ENCODE measurements at regions of chr15 and their contacts with region 1.

Region 1: GRCh38 chr15:51162865-51163762 is 68.4 kb upstream of the TNFAIP8L3 start:
- DNase-seq: peak; percentile 85
- H3K4me3 ChIP-seq: peak overlapping the region in 1 of 3 experiments; percentile 23
- H3K27ac ChIP-seq: no peak overlapping the region
- H3K4me1 ChIP-seq: peaks cover 4% of the 10 kb centered on the region
- H3K27me3 ChIP-seq: peaks cover 9 to 12% of the 10 kb centered on the region in 2 experiments
- CTCF ChIP-seq: peak; percentile 87 to 94
- POLR2A ChIP-seq: no peak

Region 2: GRCh38 chr15:50633653-50634052 is 529.5 kb before region 1 on chr15:
- CTCF ChIA-PET with region 1: no interaction called
- POLR2A ChIA-PET with region 1: no interaction called
- dilution Hi-C with region 1: no loop called
- intact Hi-C with region 1: no loop called
- DNase-seq: peak; percentile 59
- H3K4me3 ChIP-seq: peak overlapping the region in 1 of 3 experiments; percentile 44
- H3K27ac ChIP-seq: peak overlapping the region; percentile 50
- H3K4me1 ChIP-seq: peaks cover 22% of the 10 kb centered on the region
- H3K27me3 ChIP-seq: no peaks in the 10 kb centered on the region
- CTCF ChIP-seq: no peak
- POLR2A ChIP-seq: no peak

Region 3: GRCh38 chr15:51093839-51094605 is 69.1 kb before region 1 on chr15:
- CTCF ChIA-PET with region 1: interaction called, 28 read pairs
- POLR2A ChIA-PET with region 1: no interaction called
- dilution Hi-C with region 1: no loop called
- intact Hi-C with region 1: loop called (anchors 2 kb)
- DNase-seq: peak; percentile 59
- H3K4me3 ChIP-seq: peak overlapping the region; percentile 75 to 95 (median 91)
- H3K27ac ChIP-seq: peak overlapping the region; percentile 61
- H3K4me1 ChIP-seq: peaks cover 78% of the 10 kb centered on the region
- H3K27me3 ChIP-seq: no peaks in the 10 kb centered on the region
- CTCF ChIP-seq: no peak
- POLR2A ChIP-seq: peak; percentile 38

Region 4: DNA sequence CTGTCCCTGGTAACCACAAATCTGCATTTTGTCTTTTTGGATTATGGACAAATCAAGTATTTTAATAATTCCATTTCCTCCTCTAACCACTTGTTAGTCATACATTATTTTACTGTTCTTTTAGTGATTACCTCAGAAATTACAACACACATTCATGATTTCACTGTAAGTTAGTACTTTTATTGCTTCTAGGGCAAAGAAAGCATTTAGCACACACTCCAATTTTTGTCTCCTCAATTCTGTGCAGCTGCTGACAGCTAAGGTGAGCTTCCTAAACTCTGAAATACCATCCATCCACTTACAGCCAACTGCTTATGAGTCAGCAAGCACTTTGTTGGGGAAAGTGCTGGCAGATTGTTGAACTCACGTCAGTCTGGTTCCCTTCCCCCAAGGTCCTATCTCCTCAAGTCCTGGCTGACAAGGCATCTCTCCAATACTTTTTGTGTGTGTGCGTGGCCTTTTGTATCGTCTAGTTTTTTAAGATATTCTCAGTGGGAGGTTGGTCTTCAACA is 19.0 kb before region 1 on chr15:
- CTCF ChIA-PET with region 1: interaction called, 30 read pairs
- POLR2A ChIA-PET with region 1: no interaction called
- dilution Hi-C with region 1: no loop called
- intact Hi-C with region 1: no loop called
- DNase-seq: peak; percentile 41
- H3K4me3 ChIP-seq: no peak overlapping the region
- H3K27ac ChIP-seq: no peak overlapping the region
- H3K4me1 ChIP-seq: peaks cover 5% of the 10 kb centered on the region
- H3K27me3 ChIP-seq: no peaks in the 10 kb centered on the region
- CTCF ChIP-seq: no peak
- POLR2A ChIP-seq: no peak

Region 5: GRCh38 chr15:51227940-51228783 is 65.0 kb after region 1 on chr15:
- CTCF ChIA-PET with region 1: interaction called, 43 read pairs
- POLR2A ChIA-PET with region 1: no interaction called
- dilution Hi-C with region 1: no loop called
- intact Hi-C with region 1: no loop called
- DNase-seq: peak; percentile 60
- H3K4me3 ChIP-seq: no peak overlapping the region
- H3K27ac ChIP-seq: peak overlapping the region; percentile 11
- H3K4me1 ChIP-seq: peaks cover 27% of the 10 kb centered on the region
- H3K27me3 ChIP-seq: peaks cover 21 to 24% of the 10 kb centered on the region in 2 experiments
- CTCF ChIP-seq: no peak
- POLR2A ChIP-seq: no peak

Region 6: DNA sequence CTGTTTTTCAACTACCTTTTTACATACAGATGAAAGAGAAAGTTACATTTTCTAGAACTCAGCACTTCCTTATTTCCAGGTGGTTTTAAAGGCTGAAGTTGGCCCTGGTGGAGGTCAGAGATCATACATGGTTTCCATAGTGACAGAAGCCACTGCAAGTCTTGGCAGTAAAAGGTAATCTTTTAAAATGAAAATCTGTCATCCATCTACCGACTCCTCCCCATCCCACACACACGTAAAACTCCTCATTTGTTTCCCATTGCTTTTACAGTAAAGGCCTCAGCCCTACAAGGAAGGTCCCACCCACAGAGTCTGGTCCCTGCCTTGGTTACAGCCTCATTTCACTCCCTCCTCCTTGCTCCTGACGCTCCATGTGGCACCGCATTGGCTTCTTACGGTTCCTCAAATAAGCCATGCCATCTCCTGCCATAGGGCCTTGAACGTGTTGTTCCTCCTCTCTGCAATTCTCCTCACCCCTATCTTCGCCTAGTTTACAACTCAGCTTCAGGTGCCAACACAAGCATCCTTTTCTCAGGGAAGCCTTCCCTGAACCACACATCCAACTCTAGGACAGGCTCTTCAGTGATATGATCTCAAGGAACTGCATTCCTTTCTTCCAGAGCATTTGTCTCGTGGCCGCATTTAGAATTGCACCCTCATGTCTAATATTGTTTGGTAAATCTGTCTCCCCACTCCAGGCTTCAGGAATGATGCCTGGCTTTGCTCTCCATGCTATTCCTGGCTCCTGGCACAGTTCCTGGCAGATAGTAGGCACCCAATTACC is 172.6 kb after region 1 on chr15:
- CTCF ChIA-PET with region 1: interaction called, 16 read pairs
- POLR2A ChIA-PET with region 1: no interaction called
- dilution Hi-C with region 1: no loop called
- intact Hi-C with region 1: no loop called
- DNase-seq: no peak
- H3K4me3 ChIP-seq: no peak overlapping the region
- H3K27ac ChIP-seq: no peak overlapping the region
- H3K4me1 ChIP-seq: peaks cover 16% of the 10 kb centered on the region
- H3K27me3 ChIP-seq: peaks cover 85 to 87% of the 10 kb centered on the region in 2 experiments
- CTCF ChIP-seq: no peak
- POLR2A ChIP-seq: no peak

Region 7: GRCh38 chr15:51499379-51499976 is 336.4 kb after region 1 on chr15:
- CTCF ChIA-PET with region 1: interaction called, 30 read pairs
- POLR2A ChIA-PET with region 1: no interaction called
- dilution Hi-C with region 1: no loop called
- intact Hi-C with region 1: loop called (anchors 1 kb)
- DNase-seq: peak; percentile 59
- H3K4me3 ChIP-seq: no peak overlapping the region
- H3K27ac ChIP-seq: no peak overlapping the region
- H3K4me1 ChIP-seq: peaks cover 19% of the 10 kb centered on the region
- H3K27me3 ChIP-seq: no peaks in the 10 kb centered on the region
- CTCF ChIP-seq: peak; percentile 61 to 66
- POLR2A ChIP-seq: no peak